HEK293 (cell line): ENCODE measurements at regions of chr7 and their contacts with region 1.

Region 1: DNA sequence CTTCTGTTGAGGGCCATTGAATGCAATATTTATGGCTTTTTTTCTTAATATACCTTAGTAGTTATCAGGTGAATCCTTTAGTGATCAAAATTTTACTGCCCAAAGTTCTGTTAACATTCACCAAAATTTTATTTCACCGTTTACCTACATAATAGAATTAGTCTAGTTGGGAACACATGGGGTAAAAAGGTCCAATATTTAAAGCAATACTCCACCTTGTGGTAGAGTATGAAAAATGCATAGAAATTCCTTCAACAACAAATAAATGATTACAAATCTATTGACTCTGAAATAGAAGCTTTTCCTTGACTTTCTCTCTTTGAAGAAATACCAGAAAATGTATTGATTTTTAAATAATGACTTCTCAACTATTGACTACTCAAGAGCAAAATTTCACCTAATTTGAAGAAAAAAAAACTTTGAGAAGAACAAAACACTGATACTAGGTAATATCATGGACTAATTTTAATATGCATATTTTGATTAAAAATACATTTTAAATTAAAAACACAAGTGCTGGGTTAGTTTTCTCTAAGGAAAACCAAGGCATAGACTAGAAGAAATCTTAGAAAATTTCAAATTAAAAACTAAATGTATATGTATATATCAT is 43.3 kb downstream of the POLR1F start:
- H3K4me3 ChIP-seq: no peak overlapping the region
- H3K27ac ChIP-seq: no peak overlapping the region
- H3K4me1 ChIP-seq: no peaks in the 10 kb centered on the region
- CTCF ChIP-seq: no peak

Region 2: GRCh38 chr7:19118636-19119371 is 546.7 kb before region 1 on chr7:
- CTCF ChIA-PET with region 1: interaction called, 11 read pairs
- POLR2A ChIA-PET with region 1: no interaction called
- H3K4me3 ChIP-seq: no peak overlapping the region
- H3K27ac ChIP-seq: no peak overlapping the region
- H3K4me1 ChIP-seq: peaks cover 10% of the 10 kb centered on the region
- CTCF ChIP-seq: no peak

Region 3: DNA sequence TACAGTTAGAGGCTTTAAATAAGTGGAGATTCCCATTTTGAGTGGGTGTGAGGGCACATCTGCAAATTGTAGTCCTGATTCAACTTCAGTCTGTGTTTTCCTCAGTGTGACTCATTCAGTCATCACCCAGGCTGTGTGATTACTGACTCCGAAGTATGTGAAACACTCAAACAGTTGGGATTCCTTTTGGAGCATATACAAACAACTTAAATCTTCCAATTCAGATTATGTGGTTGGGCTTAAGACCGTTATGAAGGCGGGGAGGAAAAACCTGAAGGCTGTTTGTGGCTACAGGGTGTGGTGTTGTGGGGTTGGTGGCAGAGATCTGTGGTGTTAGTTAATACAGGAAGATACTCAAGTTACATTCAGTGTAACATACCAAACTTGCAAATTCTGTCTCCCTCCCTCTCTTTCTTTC is 260.6 kb before region 1 on chr7:
- CTCF ChIA-PET with region 1: no interaction called
- POLR2A ChIA-PET with region 1: no interaction called
- H3K4me3 ChIP-seq: no peak overlapping the region; the same call in 1 of the 2 replicates
- H3K27ac ChIP-seq: no peak overlapping the region
- H3K4me1 ChIP-seq: peaks cover 2% of the 10 kb centered on the region; the same call in 1 of the 2 replicates
- CTCF ChIP-seq: no peak